Activated CD8-positive, alpha-beta T cell treated with anti-CD3 and anti-CD28 coated beads, Interleukin-2, amount 10 ng/mL, durations not matched to agents 7 days and 5 days (primary cell): ENCODE measurements at regions of chr11 and their contacts with region 1.

Region 1: DNA sequence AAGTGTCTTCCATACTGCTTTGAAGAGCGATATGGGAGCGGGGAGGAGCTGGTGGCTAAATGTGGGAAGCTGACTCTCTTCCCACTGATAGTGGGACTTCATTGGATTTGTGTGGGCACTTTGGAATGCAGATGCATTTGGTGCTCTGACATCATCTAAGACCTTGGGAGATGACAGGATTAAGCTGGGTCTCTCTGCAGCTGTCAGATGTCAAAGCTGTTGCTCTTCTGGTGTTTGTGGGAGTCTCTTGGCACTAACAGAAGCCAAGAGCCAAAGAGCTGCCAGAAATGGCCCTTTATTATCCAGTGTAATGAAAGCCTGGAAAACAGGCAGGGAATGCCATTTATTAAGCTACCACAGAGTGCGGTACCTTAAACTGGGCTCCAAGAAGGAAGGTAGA is 20.6 kb downstream of the GRAMD1B start:
- DNase-seq: no peak
- ATAC-seq: no peak
- H3K4me3 Mint-ChIP-seq: no peak overlapping the region
- H3K27ac Mint-ChIP-seq: peak overlapping the region; percentile 82
- H3K4me1 Mint-ChIP-seq: peaks cover 68% of the 10 kb centered on the region
- H3K27me3 Mint-ChIP-seq: no peaks in the 10 kb centered on the region

Region 2: DNA sequence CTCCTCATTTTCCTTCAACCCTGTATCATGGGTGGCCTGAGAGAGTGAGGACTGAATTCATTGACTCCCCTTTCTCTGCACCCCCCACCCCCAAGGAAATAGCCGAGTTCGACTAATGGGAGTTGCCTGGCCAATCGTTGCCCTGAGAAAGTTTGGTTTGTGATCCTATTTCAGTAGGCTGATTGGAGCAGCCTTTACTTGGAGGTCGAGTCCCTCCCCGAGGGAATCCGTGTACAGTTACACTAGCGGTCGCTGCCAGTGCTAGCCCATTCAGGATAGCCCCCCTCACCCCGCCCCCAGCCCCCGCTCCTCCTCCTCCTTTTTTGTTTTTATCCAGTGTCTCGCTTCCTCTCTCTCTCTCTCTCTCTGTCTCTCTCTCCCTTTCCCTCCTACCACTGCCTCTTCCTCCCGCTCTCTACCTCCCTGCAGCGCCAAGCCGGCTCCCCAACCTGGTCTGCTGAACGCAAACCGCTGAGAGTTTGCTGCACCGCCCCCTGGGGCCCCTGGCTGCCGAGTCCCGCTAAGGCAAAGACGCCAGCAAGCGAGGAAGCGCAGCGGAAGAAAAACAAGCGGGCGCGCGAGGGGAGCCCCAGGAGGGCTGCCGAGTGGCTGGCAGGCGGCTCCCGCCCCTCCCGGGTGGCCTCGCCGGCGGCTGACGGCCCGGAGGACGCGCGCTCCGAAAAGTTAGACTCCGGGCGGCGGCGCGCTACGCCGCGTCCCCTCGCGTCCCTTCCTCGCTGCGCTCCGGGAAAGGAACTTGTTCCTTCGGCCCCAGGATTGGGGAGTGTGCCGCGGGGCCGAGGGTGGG is 20.5 kb before region 1 on chr11 and contains the start of gene GRAMD1B:
- CTCF ChIA-PET with region 1: interaction called, 11 read pairs
- POLR2A ChIA-PET with region 1: interaction called, 6 read pairs
- DNase-seq: peak; percentile 90
- ATAC-seq: peak; percentile 85
- H3K4me3 Mint-ChIP-seq: peak within 1 kb of the TSS; percentile 88
- H3K27ac Mint-ChIP-seq: peak within 1 kb of the TSS; percentile 96
- H3K4me1 Mint-ChIP-seq: peaks cover 47% of the 10 kb centered on the region
- H3K27me3 Mint-ChIP-seq: peaks cover 3% of the 10 kb centered on the region
- total RNA-seq, gene GRAMD1B: 22.8 to 26.0 TPM

Region 3: GRCh38 chr11:123438191-123438627 is 12.4 kb before region 1 on chr11:
- CTCF ChIA-PET with region 1: interaction called, 15 read pairs
- POLR2A ChIA-PET with region 1: interaction called, 4 read pairs
- DNase-seq: no peak
- ATAC-seq: peak; percentile 43
- H3K4me3 Mint-ChIP-seq: peak overlapping the region; percentile 1
- H3K27ac Mint-ChIP-seq: peak overlapping the region; percentile 60
- H3K4me1 Mint-ChIP-seq: peaks cover 91% of the 10 kb centered on the region
- H3K27me3 Mint-ChIP-seq: no peaks in the 10 kb centered on the region